Panc1 (cell line): ENCODE measurements at regions of chr12 and their contacts with region 1.

Region 1: GRCh38 chr12:58668871-58669270 is 251.4 kb downstream of the LRIG3 start:
- DNase-seq: no peak
- ATAC-seq: no peak
- H3K4me3 ChIP-seq: no peak overlapping the region
- H3K27ac ChIP-seq: no peak overlapping the region
- H3K4me1 ChIP-seq: no peaks in the 10 kb centered on the region
- H3K27me3 ChIP-seq: no peaks in the 10 kb centered on the region
- CTCF ChIP-seq: no peak

Region 2: DNA sequence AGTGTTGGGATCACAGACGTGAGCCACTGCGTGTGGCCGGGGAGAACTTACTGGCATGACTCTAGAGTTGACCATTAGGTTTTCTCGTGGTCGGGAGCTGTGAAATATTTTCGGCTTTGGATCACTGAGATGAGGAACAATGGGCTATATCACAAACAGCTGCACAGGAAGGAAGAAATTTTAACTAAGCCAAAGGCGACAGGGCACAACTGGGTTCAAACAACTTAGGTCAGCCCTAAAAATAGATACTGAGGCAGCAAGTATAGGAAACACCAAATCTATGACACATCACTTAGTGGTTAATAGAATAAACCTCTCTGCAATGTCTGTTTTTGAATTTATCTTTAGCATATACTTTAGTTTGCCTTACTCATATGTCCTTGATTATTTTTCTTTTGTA is 88.6 kb after region 1 on chr12:
- CTCF ChIA-PET with region 1: no interaction called
- POLR2A ChIA-PET with region 1: interaction called, 11 read pairs
- in situ Hi-C with region 1: no loop called
- intact Hi-C with region 1: no loop called
- DNase-seq: no peak
- ATAC-seq: no peak
- H3K4me3 ChIP-seq: no peak overlapping the region
- H3K27ac ChIP-seq: no peak overlapping the region
- H3K4me1 ChIP-seq: no peaks in the 10 kb centered on the region
- H3K27me3 ChIP-seq: no peaks in the 10 kb centered on the region
- CTCF ChIP-seq: no peak